ENCODE measurements at regions of chr1 and their contacts with region 1.

Region 1: DNA sequence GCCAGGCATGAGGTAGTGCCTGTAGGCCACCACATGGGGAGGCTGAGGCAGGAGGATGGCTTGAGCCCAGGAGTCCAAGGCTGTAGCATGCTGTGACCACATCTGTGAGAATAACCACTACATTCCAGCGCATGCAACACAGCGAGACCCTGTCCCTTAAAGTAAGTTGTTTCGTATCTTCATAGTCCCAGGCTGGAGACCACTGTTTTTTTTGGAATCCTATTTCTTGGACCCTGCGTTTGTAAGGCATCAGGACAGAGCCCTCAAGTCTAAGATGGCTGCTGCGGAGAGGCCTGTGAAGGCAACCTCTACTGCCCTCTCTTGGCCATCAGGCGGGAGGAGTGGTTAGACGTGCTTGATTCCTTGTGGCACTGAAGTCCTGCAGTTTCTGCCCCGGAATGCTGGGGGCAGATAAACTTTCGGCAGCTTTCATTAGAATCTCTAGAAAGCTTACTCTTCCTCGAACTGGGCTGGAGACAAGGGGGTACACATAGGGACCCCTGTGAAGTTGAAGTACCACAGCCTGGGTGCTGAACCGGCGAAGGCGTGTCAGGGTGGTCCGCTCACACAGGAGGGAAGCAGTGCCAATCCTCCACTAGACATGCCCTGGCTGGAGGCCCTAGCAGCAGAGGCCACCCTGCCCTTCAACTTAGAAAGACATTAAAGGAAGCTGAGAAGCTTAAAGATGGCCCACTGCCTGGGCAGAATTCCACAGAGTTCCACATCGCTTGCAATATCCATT is 36.6 kb downstream of the RABIF start:
- DNase-seq: peak; percentile 70
- ATAC-seq: peak; percentile 80
- H3K4me3 Mint-ChIP-seq: no peak overlapping the region
- H3K27ac Mint-ChIP-seq: no peak overlapping the region
- H3K4me1 Mint-ChIP-seq: peaks cover 6% of the 10 kb centered on the region
- H3K27me3 Mint-ChIP-seq: no peaks in the 10 kb centered on the region

Region 2: GRCh38 chr1:201640624-201641023 is 1211.7 kb before region 1 on chr1:
- CTCF ChIA-PET with region 1: no interaction called
- POLR2A ChIA-PET with region 1: no interaction called
- intact Hi-C with region 1: no loop called
- DNase-seq: no peak
- ATAC-seq: no peak
- H3K4me3 Mint-ChIP-seq: no peak overlapping the region
- H3K27ac Mint-ChIP-seq: no peak overlapping the region
- H3K4me1 Mint-ChIP-seq: no peaks in the 10 kb centered on the region
- H3K27me3 Mint-ChIP-seq: peaks cover 5% of the 10 kb centered on the region

Region 3: DNA sequence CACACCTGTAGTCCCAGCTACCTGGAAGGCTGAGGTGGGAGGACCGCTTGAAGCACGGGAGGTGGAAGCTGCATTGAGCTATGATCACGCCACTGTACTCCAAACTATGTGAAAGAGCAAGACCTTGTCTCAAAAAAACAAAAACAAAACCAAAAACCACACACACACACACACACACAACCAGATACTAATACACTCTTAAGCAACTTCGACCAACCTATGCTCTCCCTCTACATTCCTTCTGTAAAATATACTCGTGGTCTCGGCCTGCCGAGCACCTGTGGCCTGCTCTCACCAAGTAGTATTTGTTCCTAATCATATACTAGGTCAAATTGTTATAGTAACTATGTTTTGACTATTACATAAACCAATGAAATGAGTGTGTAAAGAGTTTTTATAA is 128.6 kb before region 1 on chr1:
- CTCF ChIA-PET with region 1: no interaction called
- POLR2A ChIA-PET with region 1: interaction called, 4 read pairs
- intact Hi-C with region 1: loop called in 1 of 2 experiments (anchors 2 kb)
- DNase-seq: no peak
- ATAC-seq: no peak
- H3K4me3 Mint-ChIP-seq: no peak overlapping the region
- H3K27ac Mint-ChIP-seq: no peak overlapping the region
- H3K4me1 Mint-ChIP-seq: peaks cover 2% of the 10 kb centered on the region
- H3K27me3 Mint-ChIP-seq: no peaks in the 10 kb centered on the region

Region 4: GRCh38 chr1:202750758-202751157 is 101.6 kb before region 1 on chr1:
- CTCF ChIA-PET with region 1: interaction called, 9 read pairs
- POLR2A ChIA-PET with region 1: no interaction called
- intact Hi-C with region 1: loop called (anchors 2 kb)
- DNase-seq: no peak
- ATAC-seq: no peak
- H3K4me3 Mint-ChIP-seq: no peak overlapping the region
- H3K27ac Mint-ChIP-seq: no peak overlapping the region
- H3K4me1 Mint-ChIP-seq: no peaks in the 10 kb centered on the region
- H3K27me3 Mint-ChIP-seq: no peaks in the 10 kb centered on the region